ENCODE measurements at regions of chr3 and their contacts with region 1.

Region 1: GRCh38 chr3:101676765-101677435 is at the start of gene ZBTB11:
- DNase-seq: peak; percentile 100
- H3K4me3 ChIP-seq: peak within 1 kb of the TSS; percentile 79
- H3K27ac ChIP-seq: peak within 1 kb of the TSS; percentile 70
- H3K4me1 ChIP-seq: peaks cover 22% of the 10 kb centered on the region
- H3K27me3 ChIP-seq: no peaks in the 10 kb centered on the region
- CTCF ChIP-seq: peak; percentile 73
- total RNA-seq, gene ZBTB11: 18.0 and 22.1 TPM in 2 replicates

Region 2: DNA sequence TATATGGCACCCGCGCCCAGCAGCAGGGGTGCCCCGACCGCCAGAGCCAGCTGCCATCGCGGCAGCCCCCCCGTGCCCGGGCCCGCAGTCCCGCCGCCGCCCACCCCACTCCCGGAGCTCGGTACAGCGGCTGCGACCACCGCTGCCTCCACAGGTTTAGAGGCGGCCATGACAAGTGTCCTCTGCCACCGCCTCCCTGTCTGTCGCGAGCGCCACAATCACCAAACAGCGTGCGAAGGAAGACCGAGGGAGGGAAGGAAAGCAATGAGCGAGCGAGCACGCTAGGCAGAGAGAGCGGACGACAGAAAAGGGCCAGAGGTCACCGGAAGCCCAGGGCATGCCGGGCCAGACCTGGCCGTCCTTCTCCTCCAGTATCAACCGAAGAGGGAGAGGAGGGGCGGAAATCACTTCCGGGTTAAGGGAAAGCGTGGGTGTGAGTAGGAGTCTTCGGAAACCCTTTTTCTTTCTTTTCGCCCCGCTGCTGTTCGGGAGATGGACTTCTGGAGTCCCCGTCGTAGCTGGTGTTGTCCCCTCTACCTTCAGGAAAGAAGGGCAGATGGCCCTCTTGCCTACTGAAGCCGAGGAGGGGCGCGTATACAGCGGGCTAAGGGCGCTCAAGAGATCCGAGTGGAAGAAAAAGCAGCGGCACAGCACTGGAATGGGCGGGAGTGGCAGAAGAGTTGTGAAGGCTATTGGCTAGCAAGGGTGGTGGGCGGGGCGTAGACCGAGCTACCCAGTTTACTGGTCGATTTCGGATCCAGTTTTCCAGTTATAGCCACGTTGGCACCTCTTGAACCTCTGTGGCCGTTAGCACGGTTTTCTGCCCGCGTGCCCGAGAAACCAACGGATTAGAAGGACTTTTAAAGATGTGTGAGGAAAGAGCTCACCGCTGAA is 1275.9 kb before region 1 on chr3 and contains the starts of genes LNP1 and TOMM70:
- CTCF ChIA-PET with region 1: no interaction called
- POLR2A ChIA-PET with region 1: no interaction called
- intact Hi-C with region 1: loop called (anchors 2 kb)
- DNase-seq: peak; percentile 97 to 98
- H3K4me3 ChIP-seq: peak within 1 kb of the TSS; percentile 83
- H3K27ac ChIP-seq: peak within 1 kb of the TSS; percentile 78
- H3K4me1 ChIP-seq: peaks cover 36% of the 10 kb centered on the region
- H3K27me3 ChIP-seq: no peaks in the 10 kb centered on the region
- CTCF ChIP-seq: no peak
- total RNA-seq, gene LNP1: 4.8 TPM in 2 replicates
- total RNA-seq, gene TOMM70: 63.7 and 65.2 TPM in 2 replicates

Region 3: DNA sequence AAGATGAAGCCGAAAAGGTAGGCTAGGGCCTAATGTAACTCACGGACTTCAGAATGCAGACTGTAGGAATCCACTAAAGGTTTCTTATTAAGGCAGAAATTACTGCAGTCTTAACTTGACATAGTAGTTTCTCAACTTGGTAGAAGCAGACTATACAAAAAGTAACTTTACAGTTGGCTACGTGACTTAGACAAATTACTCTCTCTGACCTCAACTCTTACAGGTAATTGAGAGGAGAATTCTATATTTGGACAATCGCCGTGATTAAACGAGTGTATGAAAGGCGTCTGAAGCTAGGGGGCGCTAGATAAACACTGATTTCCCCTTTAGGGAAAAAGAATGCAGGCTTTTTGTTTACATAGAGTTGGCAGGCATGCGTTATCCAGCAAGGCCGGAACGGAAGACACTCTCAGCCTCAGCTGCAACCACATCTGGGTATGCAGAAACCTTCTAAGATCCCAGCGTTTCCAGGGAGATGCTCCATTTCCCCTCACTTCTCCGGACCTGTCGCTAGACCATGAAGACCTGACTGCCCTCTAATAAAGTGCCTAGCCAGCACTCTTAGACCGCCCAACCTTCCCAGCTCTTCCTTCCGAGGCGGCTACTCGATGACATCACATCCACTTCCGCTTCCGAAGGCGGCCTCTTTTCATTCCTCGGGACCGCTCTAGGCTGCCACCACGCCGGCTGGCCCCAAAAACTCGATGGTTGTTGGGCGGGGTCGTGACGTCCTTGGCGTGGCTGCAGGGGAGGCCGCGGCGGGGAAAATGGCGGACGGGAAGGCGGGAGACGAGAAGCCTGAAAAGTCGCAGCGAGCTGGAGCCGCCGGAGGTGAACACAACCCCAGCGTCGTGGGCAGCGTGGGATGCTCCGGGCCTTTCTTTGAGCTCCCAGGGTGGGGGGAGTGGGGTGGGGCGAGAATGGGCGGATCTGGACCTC is 103.2 kb before region 1 on chr3 and contains the start of gene PCNP:
- CTCF ChIA-PET with region 1: interaction called, 4 read pairs
- POLR2A ChIA-PET with region 1: interaction called, 9 read pairs
- intact Hi-C with region 1: loop called (anchors 1 kb)
- DNase-seq: peak; percentile 99 to 100
- H3K4me3 ChIP-seq: peak within 1 kb of the TSS; percentile 87
- H3K27ac ChIP-seq: peak within 1 kb of the TSS; percentile 80
- H3K4me1 ChIP-seq: peaks cover 22% of the 10 kb centered on the region
- H3K27me3 ChIP-seq: no peaks in the 10 kb centered on the region
- CTCF ChIP-seq: peak; percentile 100
- total RNA-seq, gene PCNP: 164 and 223 TPM in 2 replicates

Region 4: GRCh38 chr3:101724329-101725193 is 47.7 kb after region 1 on chr3 and contains the start of gene CEP97:
- CTCF ChIA-PET with region 1: interaction called, 7 read pairs
- POLR2A ChIA-PET with region 1: interaction called, 6 read pairs
- intact Hi-C with region 1: loop called (anchors 1 kb)
- DNase-seq: peak; percentile 93 to 96
- H3K4me3 ChIP-seq: peak within 1 kb of the TSS; percentile 90
- H3K27ac ChIP-seq: peak within 1 kb of the TSS; percentile 31
- H3K4me1 ChIP-seq: peaks cover 10% of the 10 kb centered on the region
- H3K27me3 ChIP-seq: no peaks in the 10 kb centered on the region
- CTCF ChIP-seq: no peak
- total RNA-seq, gene CEP97: 13.4 and 20.6 TPM in 2 replicates

Region 5: GRCh38 chr3:101849051-101849720 is 172.3 kb after region 1 on chr3 and contains the start of gene NFKBIZ:
- CTCF ChIA-PET with region 1: no interaction called
- POLR2A ChIA-PET with region 1: no interaction called
- intact Hi-C with region 1: loop called (anchors 5 kb)
- DNase-seq: peak; percentile 91 to 99
- H3K4me3 ChIP-seq: peak within 1 kb of the TSS; percentile 88
- H3K27ac ChIP-seq: peak within 1 kb of the TSS; percentile 80
- H3K4me1 ChIP-seq: peaks cover 24% of the 10 kb centered on the region
- H3K27me3 ChIP-seq: no peaks in the 10 kb centered on the region
- CTCF ChIP-seq: no peak
- total RNA-seq, gene NFKBIZ: 44.9 and 57.7 TPM in 2 replicates

Measured in PC-9 (cell line).